PC-3 (cell line): ENCODE measurements at regions of chr17 and their contacts with region 1.

Region 1: DNA sequence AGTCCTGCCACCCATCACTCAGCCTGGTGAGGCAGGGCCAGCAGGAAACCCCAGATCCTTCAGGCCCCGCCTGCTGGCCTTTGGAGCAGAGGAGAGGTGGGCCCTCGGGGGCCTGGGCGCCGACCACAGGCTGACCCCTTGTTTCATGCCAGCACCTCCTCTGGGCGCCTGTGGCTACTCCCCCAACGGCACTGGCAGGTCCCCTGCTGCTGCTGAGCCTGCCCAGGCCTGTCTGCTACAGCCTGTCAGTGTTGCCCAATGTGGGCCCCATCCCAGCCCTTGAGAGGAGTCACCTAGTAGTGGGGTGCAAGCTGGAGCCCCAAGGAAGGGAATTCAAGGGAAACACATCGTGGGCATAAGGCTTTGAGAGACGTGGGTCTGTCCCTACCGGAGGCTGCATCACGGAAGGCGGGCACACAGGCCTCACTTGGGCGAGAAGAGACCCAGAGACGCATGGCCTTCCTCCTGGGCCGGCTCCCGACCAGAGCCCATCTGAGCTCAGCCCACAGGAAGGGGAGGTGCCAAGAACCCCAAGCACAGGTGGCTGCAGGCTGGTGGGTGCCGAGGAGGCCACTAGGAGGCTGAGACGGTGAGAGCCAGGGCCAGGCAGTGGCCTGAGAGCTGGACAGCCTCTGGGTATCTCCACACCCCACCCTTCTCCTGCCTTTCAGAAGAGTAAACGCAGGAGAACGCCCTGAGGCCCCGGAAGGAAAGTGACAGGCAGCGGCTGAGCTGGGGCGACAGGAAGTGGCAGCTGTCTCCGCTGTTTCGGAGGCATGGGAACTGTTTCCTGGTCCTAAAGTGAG is 8.0 kb upstream of the FASN start:
- DNase-seq: peak; percentile 85
- ATAC-seq: peak; percentile 86
- H3K4me3 ChIP-seq: no peak overlapping the region
- H3K27ac ChIP-seq: peak overlapping the region; percentile 69
- H3K4me1 ChIP-seq: peaks cover 33% of the 10 kb centered on the region
- H3K27me3 ChIP-seq: no peaks in the 10 kb centered on the region
- CTCF ChIP-seq: peak; percentile 60

Region 2: DNA sequence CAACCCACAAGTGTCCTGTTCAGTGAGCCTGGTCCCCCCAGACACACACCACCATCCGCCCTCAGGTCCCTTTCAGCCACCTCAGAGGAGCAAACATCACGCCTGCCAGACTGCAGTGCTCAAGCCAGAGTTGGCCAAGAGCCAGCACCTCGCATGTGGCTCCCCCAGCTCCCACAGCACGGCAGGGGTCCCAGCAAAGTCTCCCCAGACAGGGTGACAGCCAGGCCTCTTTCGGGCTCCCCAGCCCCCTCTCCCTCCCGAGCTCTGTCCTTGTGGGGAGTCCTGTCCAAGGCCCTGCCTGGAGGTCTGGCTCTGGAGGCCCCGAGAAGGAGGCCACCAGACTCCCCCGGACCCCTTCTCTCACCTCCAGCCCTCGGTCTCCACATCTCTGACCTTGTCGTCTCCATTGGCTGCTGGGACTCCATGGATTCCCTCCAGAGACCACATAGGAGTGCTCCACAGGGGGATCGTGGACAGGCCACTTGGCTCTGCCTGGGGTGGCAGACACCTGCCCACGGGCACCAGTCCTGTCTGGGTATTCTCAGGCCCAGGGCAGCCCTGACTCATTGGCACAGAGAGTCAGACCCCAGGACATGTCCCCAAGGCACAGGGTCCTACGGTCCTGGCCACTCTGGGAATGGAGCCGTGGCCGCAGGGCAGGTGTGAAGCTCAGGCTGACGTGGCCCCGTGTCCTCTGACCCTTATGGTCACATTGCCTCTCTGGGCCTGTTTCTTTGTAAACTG is 157.3 kb before region 1 on chr17:
- CTCF ChIA-PET with region 1: no interaction called
- POLR2A ChIA-PET with region 1: no interaction called
- intact Hi-C with region 1: no loop called
- DNase-seq: no peak
- ATAC-seq: no peak
- H3K4me3 ChIP-seq: no peak overlapping the region
- H3K27ac ChIP-seq: no peak overlapping the region
- H3K4me1 ChIP-seq: no peaks in the 10 kb centered on the region
- H3K27me3 ChIP-seq: no peaks in the 10 kb centered on the region
- CTCF ChIP-seq: no peak

Region 3: DNA sequence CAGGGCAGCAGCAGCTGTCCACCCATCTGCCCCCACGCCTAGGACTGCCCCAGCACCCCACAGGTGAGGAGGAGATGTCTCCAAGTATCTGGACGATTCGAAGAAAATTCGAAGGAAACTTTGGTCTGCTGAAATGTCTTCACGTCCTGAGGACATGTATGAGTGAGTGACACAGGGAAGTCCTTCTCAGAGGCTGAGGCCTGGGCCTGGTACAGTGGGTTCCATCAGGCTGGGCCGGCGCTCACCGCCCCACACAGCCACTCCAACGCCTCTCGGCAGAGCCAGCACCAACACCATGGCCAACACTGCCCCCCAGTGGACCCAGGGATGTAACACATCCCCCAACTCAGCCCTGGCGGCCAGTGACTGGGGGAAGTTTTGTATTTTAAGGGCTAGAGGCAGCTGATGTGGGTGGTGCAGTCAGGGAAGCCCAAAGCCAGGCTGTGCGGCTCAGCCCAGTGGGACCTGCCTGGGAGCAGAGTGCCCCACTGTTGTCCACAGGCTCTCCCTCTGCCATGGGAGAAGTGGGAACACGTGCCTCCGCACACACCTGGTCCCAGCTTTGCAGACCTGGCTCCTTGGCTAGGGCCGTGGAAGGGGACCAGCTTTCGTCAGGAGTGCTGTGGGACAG is 47.8 kb after region 1 on chr17:
- CTCF ChIA-PET with region 1: interaction called, 3 read pairs
- POLR2A ChIA-PET with region 1: interaction called, 3 read pairs
- intact Hi-C with region 1: loop called (anchors 1 kb)
- DNase-seq: peak; percentile 85
- ATAC-seq: peak; percentile 96
- H3K4me3 ChIP-seq: no peak overlapping the region
- H3K27ac ChIP-seq: no peak overlapping the region
- H3K4me1 ChIP-seq: no peaks in the 10 kb centered on the region
- H3K27me3 ChIP-seq: no peaks in the 10 kb centered on the region
- CTCF ChIP-seq: peak; percentile 91

Region 4: GRCh38 chr17:82267575-82268379 is 161.7 kb after region 1 on chr17:
- CTCF ChIA-PET with region 1: no interaction called
- POLR2A ChIA-PET with region 1: no interaction called
- intact Hi-C with region 1: no loop called
- DNase-seq: peak; percentile 92
- ATAC-seq: peak; percentile 94
- H3K4me3 ChIP-seq: peak overlapping the region; percentile 43
- H3K27ac ChIP-seq: peak overlapping the region; percentile 74
- H3K4me1 ChIP-seq: peaks cover 55% of the 10 kb centered on the region
- H3K27me3 ChIP-seq: no peaks in the 10 kb centered on the region
- CTCF ChIP-seq: no peak